HCT116 (cell line): ENCODE measurements at regions of chr5 and their contacts with region 1.

Region 1: DNA sequence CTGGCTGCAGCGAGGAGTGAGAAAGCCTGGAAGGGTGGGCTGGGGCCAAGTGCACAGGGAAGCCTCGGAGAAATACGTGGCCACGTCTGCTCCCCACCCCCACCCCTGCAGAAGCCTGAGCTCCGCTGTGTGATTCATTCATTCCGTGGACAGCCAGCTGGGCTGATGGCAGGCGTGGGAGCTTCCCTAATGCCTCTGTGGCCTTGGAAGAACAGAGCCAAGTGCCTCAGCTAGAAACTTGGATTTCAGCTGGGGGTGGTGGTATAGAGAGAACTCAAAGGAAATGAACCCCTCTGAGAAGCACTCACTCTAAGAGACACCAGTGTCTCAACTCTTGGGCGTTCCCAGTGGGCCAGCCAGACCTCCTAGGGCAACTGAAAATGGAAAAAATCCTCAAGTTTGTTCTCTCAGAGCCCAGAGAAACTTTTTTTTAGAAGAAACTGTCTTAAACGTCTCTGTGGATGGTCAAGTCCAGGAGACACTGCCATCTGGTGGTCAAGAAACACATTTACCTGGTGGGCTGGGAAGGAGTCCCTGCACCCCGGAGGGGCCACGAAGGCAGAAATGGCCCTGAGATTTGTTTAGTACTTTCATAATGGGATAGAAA is 18.0 kb downstream of the ATOX1 start:
- DNase-seq: no peak
- ATAC-seq: peak; percentile 33
- H3K4me3 ChIP-seq: peak overlapping the region; percentile 4 to 46; a peak in 3 of 4 replicates
- H3K27ac ChIP-seq: peak overlapping the region; percentile 27
- H3K4me1 ChIP-seq: peaks cover 50 to 63% of the 10 kb centered on the region in 2 experiments
- H3K27me3 ChIP-seq: no peaks in the 10 kb centered on the region
- CTCF ChIP-seq: peak in 2 of 3 experiments; percentile 82 to 96; a peak in 4 of 6 replicates
- POLR2A ChIP-seq: no peak
- RAD21 ChIP-seq: no peak

Region 2: GRCh38 chr5:151126199-151126645 is 614.2 kb before region 1 on chr5:
- CTCF ChIA-PET with region 1: no interaction called
- POLR2A ChIA-PET with region 1: no interaction called
- RAD21 ChIA-PET with region 1: no interaction called
- intact Hi-C with region 1: loop called (anchors 2 kb)
- DNase-seq: peak; percentile 38
- ATAC-seq: peak; percentile 88
- H3K4me3 ChIP-seq: no peak overlapping the region
- H3K27ac ChIP-seq: no peak overlapping the region
- H3K4me1 ChIP-seq: peaks cover 0 to 18% of the 10 kb centered on the region in 2 experiments; a peak in 2 of 4 replicates
- H3K27me3 ChIP-seq: no peaks in the 10 kb centered on the region
- CTCF ChIP-seq: peak; percentile 72 to 90 (median 84)
- POLR2A ChIP-seq: no peak
- RAD21 ChIP-seq: peak; percentile 88

Region 3: GRCh38 chr5:151288180-151288579 is 452.3 kb before region 1 on chr5:
- CTCF ChIA-PET with region 1: no interaction called
- POLR2A ChIA-PET with region 1: no interaction called
- RAD21 ChIA-PET with region 1: no interaction called
- intact Hi-C with region 1: loop called (anchors 10 kb)
- DNase-seq: peak; percentile 41
- ATAC-seq: peak; percentile 85
- H3K4me3 ChIP-seq: no peak overlapping the region
- H3K27ac ChIP-seq: no peak overlapping the region
- H3K4me1 ChIP-seq: peaks cover 4 to 5% of the 10 kb centered on the region in 2 experiments; a peak in 3 of 4 replicates
- H3K27me3 ChIP-seq: no peaks in the 10 kb centered on the region
- CTCF ChIP-seq: peak; percentile 43 to 65 (median 44)
- POLR2A ChIP-seq: no peak
- RAD21 ChIP-seq: peak; percentile 64

Region 4: GRCh38 chr5:151447174-151448037 is 293.0 kb before region 1 on chr5 and contains the start of gene SLC36A1:
- CTCF ChIA-PET with region 1: no interaction called
- POLR2A ChIA-PET with region 1: no interaction called
- RAD21 ChIA-PET with region 1: no interaction called
- intact Hi-C with region 1: loop called (anchors 1 kb)
- DNase-seq: peak; percentile 80
- ATAC-seq: peak; percentile 92
- H3K4me3 ChIP-seq: peak within 1 kb of the TSS; percentile 73 to 77
- H3K27ac ChIP-seq: peak within 1 kb of the TSS; percentile 40
- H3K4me1 ChIP-seq: peaks cover 5 to 24% of the 10 kb centered on the region in 2 experiments; a peak in 3 of 4 replicates
- H3K27me3 ChIP-seq: no peaks in the 10 kb centered on the region
- CTCF ChIP-seq: peak; percentile 92 to 96 (median 94)
- POLR2A ChIP-seq: peak; percentile 59
- RAD21 ChIP-seq: peak; percentile 90
- total RNA-seq, gene SLC36A1: 7.4 TPM

Region 5: GRCh38 chr5:151523335-151523734 is 217.1 kb before region 1 on chr5:
- CTCF ChIA-PET with region 1: interaction called, 6 read pairs
- POLR2A ChIA-PET with region 1: no interaction called
- RAD21 ChIA-PET with region 1: no interaction called
- intact Hi-C with region 1: loop called (anchors 5 kb)
- DNase-seq: peak; percentile 39
- ATAC-seq: peak; percentile 98
- H3K4me3 ChIP-seq: no peak overlapping the region
- H3K27ac ChIP-seq: no peak overlapping the region
- H3K4me1 ChIP-seq: no peaks in the 10 kb centered on the region
- H3K27me3 ChIP-seq: no peaks in the 10 kb centered on the region
- CTCF ChIP-seq: peak; percentile 78 to 81 (median 81)
- POLR2A ChIP-seq: no peak
- RAD21 ChIP-seq: peak; percentile 89

Region 6: DNA sequence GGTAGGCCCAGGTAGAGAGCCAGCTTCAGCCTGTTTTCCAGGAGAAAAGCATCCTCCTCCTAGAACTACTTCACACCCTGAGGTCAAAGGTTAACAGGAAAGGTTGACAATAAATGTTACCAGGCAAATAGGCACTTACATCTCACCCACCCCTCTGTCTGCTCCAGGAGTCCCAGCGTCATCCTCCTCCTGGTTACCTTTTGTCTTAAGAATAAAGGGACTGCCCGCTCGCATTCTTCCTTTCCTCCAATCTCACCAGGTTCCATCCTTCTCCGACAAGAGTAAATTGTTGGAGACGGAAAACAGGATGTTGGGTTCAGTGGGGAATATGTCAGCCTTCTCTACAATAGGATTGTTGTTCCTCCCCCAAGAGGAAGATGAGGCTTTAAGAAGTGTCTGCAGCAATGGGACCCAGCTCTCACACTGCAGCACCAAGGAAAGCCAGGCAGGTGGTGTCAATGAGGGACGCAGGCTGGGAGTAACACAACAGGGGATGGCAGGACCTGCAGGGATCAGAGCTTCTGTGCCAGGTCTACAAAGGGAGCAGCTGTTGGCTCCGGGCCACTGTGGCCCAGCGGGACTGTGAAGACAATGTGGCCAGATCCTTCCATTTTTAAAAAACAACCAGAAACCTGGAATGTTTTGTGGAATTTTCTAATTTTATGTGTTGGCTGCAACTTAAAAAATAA is 178.3 kb before region 1 on chr5:
- CTCF ChIA-PET with region 1: no interaction called
- POLR2A ChIA-PET with region 1: no interaction called
- RAD21 ChIA-PET with region 1: no interaction called
- intact Hi-C with region 1: no loop called
- DNase-seq: no peak
- ATAC-seq: no peak
- H3K4me3 ChIP-seq: no peak overlapping the region
- H3K27ac ChIP-seq: no peak overlapping the region
- H3K4me1 ChIP-seq: no peaks in the 10 kb centered on the region
- H3K27me3 ChIP-seq: peaks cover 9% of the 10 kb centered on the region; the same call in 1 of the 2 replicates
- CTCF ChIP-seq: no peak
- POLR2A ChIP-seq: no peak
- RAD21 ChIP-seq: no peak

Region 7: DNA sequence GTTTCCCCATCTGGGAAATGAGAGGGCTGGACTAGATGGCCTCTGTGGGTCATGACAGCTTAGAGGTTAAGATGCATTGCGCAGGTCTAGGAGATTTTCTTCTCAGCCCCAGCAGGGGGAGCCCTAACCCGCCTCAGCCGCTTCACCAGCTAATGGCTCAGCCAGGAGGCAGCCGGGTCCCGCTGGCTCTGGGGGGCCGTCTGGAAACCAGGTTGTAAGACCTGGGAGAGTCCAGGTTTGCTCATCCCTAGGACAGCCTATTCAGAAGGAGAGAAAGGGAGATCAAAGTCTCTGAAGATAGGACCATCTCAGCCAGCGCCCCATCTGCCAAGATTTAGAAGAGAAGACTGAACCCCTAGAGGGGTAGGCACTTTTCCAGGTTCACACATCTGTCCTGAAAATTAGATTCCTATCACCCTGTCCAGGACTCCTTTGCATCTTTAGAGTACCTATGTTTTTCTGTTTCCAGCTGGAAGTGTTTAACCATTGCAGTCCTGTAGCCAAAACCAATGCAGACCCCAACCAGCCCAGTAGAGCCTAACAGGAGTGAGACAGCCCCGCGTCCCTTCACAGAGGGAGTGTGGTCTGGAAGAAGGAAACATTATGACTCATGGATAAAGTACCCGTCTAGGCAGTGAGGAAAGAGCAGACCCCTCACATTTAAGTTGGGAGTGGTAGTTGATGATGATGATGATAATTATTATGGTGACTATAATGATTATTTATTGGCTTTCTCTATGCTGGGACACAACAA is 81.3 kb before region 1 on chr5:
- CTCF ChIA-PET with region 1: interaction called, 103 read pairs
- POLR2A ChIA-PET with region 1: no interaction called
- RAD21 ChIA-PET with region 1: interaction called, 20 to 25 read pairs
- intact Hi-C with region 1: loop called (anchors 1 kb)
- DNase-seq: peak; percentile 70
- ATAC-seq: peak; percentile 99
- H3K4me3 ChIP-seq: no peak overlapping the region
- H3K27ac ChIP-seq: no peak overlapping the region
- H3K4me1 ChIP-seq: peaks cover 3 to 18% of the 10 kb centered on the region in 2 experiments; a peak in 3 of 4 replicates
- H3K27me3 ChIP-seq: no peaks in the 10 kb centered on the region
- CTCF ChIP-seq: peak; percentile 80 to 97 (median 88)
- POLR2A ChIP-seq: no peak
- RAD21 ChIP-seq: peak; percentile 95

Region 8: DNA sequence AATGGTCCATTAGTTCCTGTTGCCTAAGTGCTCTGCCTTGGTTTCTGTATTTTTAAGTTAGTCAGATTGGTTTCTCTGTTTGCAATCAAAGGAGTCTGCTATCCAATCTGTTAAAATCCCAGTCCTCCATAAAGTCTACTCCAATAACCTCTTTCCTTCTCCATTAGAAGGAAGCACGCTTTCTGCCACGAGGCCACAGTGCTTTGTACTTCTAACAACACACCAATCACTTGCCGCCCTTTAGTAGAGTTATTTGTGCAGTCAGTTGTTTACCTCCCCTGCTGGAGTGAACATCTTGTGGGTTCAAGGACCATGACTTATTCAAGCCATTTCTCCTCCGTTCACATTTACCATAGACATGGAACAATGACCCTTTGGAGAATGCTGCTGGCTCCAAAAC is 115.3 kb after region 1 on chr5:
- CTCF ChIA-PET with region 1: no interaction called
- POLR2A ChIA-PET with region 1: no interaction called
- RAD21 ChIA-PET with region 1: no interaction called
- intact Hi-C with region 1: no loop called
- DNase-seq: no peak
- ATAC-seq: no peak
- H3K4me3 ChIP-seq: no peak overlapping the region
- H3K27ac ChIP-seq: no peak overlapping the region
- H3K4me1 ChIP-seq: no peaks in the 10 kb centered on the region
- H3K27me3 ChIP-seq: peaks cover 5% of the 10 kb centered on the region; the same call in 1 of the 2 replicates
- CTCF ChIP-seq: no peak
- POLR2A ChIP-seq: no peak
- RAD21 ChIP-seq: no peak